ENCODE measurements at regions of chr19 and their contacts with region 1.

Region 1: GRCh38 chr19:55418185-55418584 is 10.6 kb upstream of the UBE2S start:
- DNase-seq: peak; percentile 26
- H3K4me3 Mint-ChIP-seq: no peak overlapping the region
- H3K27ac Mint-ChIP-seq: no peak overlapping the region
- H3K4me1 Mint-ChIP-seq: peaks cover 9% of the 10 kb centered on the region
- H3K27me3 Mint-ChIP-seq: peaks cover 10% of the 10 kb centered on the region

Region 2: DNA sequence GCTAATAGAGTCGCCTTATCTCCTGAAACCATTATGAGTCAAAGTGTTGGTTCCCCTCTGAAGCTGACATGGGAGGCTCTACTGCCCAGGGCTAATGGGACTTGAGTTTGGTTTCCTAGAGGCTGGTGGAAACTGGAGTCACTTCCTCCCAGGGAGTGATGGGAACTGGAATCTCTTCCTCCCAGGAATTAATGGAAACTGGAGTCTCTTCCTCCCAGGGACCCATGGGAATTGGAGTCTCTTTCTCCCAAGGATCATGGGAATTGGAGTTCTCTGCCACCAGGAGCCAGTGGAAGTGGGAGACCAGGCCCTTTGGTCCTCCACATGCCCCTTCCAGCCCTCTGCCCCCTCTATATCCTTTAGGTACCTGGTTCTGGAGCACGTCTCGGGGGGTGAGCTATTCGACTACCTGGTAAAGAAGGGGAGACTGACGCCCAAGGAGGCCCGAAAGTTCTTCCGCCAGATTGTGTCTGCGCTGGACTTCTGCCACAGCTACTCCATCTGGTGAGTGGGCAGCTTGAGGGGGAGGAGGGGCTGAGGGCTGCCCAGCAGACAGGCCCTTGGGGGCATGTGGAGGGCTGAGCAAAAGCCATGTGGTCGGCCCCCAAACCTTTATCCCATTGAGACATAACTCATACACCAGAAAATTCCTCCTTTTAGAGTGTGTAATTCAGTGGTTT is 128.9 kb before region 1 on chr19:
- intact Hi-C with region 1: loop called (anchors 2 kb)
- DNase-seq: no peak
- H3K4me3 Mint-ChIP-seq: no peak overlapping the region
- H3K27ac Mint-ChIP-seq: no peak overlapping the region
- H3K4me1 Mint-ChIP-seq: peaks cover 3% of the 10 kb centered on the region
- H3K27me3 Mint-ChIP-seq: no peaks in the 10 kb centered on the region

Region 3: DNA sequence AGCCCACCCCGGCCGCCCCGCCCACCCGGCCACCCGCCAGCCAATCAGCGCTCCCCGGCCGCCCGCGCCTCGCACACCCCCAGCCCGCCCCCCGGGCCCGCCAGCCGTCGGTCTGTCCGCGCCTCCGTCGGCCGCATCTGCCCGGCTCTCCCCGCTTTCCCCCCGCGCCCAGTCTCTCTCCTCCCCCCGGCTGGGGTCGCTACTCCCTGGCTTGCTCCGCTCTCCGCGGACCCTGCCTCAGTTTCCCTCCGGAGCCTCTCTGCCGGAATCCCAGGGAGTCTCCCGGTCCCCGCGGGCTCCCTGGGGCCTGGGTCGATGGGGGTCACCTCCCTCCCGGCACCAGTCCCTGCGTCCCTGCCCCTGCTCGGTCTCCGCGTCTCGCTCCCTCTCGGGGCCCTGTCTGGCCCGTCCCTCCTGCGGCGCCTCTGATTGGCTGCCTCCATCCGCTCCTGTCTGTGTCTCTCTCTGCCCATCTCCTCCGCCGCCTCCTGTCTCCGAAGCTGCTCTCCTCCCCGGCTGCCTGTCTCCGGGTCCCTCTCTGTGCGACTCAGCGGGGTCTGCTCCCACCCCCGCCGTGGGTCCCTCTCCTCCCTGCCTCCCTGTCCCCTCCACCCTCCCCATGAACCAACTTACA is 48.4 kb before region 1 on chr19:
- intact Hi-C with region 1: no loop called
- DNase-seq: no peak
- H3K4me3 Mint-ChIP-seq: peak overlapping the region; percentile 66
- H3K27ac Mint-ChIP-seq: no peak overlapping the region
- H3K4me1 Mint-ChIP-seq: no peaks in the 10 kb centered on the region
- H3K27me3 Mint-ChIP-seq: peaks cover 40% of the 10 kb centered on the region

Region 4: DNA sequence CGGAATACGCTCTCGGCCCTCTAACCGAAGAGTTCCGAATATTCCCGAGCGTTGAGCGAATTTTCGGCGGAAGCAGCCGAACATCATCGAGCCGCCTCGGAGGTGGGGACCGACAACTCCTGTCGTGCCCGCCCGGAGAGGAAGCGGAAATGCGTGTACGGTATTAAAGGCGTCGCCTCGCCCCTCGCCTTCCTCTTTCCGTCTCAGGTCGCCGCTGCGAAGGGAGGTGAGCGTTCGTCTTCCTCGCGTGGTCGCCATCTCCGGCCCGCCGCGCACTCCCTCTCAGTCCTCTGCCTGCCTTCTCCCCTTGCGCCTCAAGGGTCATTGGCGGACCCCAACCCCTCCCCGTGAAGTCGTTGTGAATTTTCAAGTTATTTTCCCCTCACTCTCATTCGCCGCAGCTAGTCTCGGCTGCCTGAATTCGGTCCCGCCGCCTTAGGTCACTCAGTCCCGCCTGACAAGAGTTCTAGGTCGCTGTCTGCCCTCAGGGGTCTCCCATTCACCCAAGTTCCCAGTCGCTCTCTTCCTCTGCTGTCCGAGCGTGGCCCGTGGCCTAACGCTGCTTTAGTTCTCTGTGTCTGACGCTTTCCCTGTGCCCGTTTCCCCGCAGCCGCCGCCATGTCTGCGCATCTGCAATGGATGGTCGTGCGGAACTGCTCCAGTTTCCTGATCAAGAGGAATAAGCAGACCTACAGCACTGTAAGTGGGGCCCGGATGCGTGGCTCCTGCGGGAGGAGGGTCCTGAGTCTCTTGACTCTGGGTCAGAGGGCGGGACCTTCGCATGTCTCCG is 32.2 kb before region 1 on chr19 and contains the start of gene RPL28:
- intact Hi-C with region 1: no loop called
- DNase-seq: peak; percentile 99
- H3K4me3 Mint-ChIP-seq: peak within 1 kb of the TSS; percentile 100
- H3K27ac Mint-ChIP-seq: peak within 1 kb of the TSS; percentile 94
- H3K4me1 Mint-ChIP-seq: peaks cover 44% of the 10 kb centered on the region
- H3K27me3 Mint-ChIP-seq: no peaks in the 10 kb centered on the region
- total RNA-seq, gene RPL28: 2,206 and 2,207 TPM in 2 replicates